ENCODE measurements at regions of chr14 and their contacts with region 1.

Region 1: GRCh38 chr14:54440873-54441868 is at the start of gene CNIH1:
- DNase-seq: peak; percentile 94
- H3K4me3 ChIP-seq: peak within 1 kb of the TSS; percentile 86
- H3K27ac ChIP-seq: peak within 1 kb of the TSS; percentile 77
- H3K4me1 ChIP-seq: peaks cover 47% of the 10 kb centered on the region
- CTCF ChIP-seq: peak; percentile 94
- total RNA-seq, gene CNIH1: 18.7 and 29.7 TPM in 2 replicates

Region 2: DNA sequence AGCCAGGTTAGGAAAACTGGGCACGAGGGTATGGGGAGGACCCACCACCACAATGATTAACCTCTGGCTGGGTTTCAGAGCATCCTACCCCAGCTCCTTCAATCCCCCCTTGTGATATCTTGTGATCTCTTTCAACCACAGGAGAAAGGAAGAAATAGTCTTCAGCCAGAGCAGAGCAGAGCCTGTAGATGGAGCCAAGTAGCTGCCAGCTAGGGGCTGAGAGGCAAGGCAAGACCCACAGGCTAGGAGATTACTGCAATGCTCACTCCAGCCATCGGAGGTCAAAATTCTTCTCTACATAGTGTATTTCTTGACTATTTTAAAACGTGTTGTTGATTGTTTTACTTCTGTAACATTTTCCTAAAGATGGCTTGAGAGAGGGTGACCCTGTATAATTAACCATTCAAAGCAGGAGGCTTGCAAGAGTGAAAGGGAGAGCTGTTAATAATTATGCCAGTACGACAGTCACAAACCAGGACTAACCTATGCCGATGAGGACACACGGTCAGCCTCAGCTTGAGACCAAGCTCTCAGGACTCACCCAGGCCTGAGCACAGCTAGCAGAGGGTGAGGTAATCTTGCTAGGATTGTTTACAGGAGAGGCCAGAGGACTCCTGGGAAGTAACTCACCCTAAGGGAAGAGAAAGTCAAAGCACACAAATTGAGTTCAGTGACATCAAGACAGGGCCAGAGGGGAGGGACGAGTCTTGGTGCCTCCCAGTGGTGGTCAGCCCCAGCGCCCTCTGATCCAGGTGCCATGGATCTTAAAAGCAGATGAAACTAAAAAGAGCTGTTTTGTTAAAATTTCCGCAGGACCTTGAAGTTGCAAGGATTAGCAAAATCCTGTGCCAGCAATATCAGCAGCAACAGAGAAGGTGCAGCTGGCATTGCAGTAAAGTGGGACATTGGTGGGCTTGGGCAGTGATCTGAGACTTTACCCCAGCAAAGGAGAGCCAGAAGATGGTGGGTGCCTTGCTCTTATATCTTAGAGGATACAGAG is 74.1 kb before region 1 on chr14:
- CTCF ChIA-PET with region 1: no interaction called
- POLR2A ChIA-PET with region 1: no interaction called
- intact Hi-C with region 1: loop called (anchors 1 kb)
- DNase-seq: peak; percentile 65
- H3K4me3 ChIP-seq: no peak overlapping the region
- H3K27ac ChIP-seq: no peak overlapping the region
- H3K4me1 ChIP-seq: no peaks in the 10 kb centered on the region
- CTCF ChIP-seq: peak; percentile 80

Region 3: DNA sequence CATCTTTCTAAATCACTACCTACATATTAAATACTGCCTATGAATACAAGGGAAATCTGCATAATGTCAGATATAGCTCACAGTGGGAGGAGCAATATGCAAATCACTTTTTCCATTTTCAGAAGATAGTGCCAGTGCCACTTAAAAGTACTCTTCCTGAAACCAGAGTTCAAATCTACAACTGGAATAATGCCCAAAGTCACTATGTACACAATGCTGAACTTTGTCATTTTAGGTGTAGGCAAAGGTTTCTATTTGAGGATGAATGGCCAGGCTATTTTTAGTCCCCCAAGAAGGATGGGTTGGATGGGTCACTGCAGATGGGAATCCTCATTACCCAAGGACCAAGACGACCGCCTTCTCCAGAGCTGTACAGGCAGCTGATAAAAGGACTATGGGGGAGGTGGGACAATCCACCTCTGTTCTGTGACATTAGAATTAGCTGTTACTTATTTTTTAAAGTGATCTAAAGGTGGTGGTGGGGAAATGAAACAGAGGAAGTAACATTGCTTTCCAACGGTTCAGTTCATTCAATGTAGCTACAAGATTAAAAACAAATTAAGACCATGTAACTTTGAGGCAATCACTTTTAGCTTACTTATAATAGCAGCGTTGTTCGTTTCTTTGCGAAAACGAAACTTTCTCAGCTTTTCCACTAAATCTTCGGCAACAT is 42.0 kb after region 1 on chr14:
- CTCF ChIA-PET with region 1: interaction called, 3 read pairs
- POLR2A ChIA-PET with region 1: interaction called, 14 read pairs
- intact Hi-C with region 1: loop called (anchors 1 kb)
- DNase-seq: peak; percentile 71
- H3K4me3 ChIP-seq: peak overlapping the region; percentile 87
- H3K27ac ChIP-seq: peak overlapping the region; percentile 93
- H3K4me1 ChIP-seq: peaks cover 71% of the 10 kb centered on the region
- CTCF ChIP-seq: no peak

Measured in OCI-LY7 (cell line).